ENCODE measurements at regions of chr17 and their contacts with region 1.

Region 1: GRCh38 chr17:43024407-43025289 is at the start of gene RND2:
- DNase-seq: peak; percentile 96
- ATAC-seq: peak; percentile 73
- H3K4me3 ChIP-seq: peak within 1 kb of the TSS; percentile 48
- H3K27ac ChIP-seq: no peak within 1 kb of the TSS
- H3K4me1 ChIP-seq: peaks cover 8% of the 10 kb centered on the region
- H3K27me3 ChIP-seq: peaks cover 4% of the 10 kb centered on the region; the same call in 1 of the 2 replicates
- CTCF ChIP-seq: peak; percentile 96
- POLR2A ChIP-seq: 0 out of 2 replicates have a peak, but pooled peaks have one; percentile 40
- RAD21 ChIP-seq: peak; percentile 91
- total RNA-seq, gene RND2: 1.1 TPM in 2 replicates

Region 2: GRCh38 chr17:43006639-43007551 is 17.8 kb before region 1 on chr17 and contains the start of gene IFI35:
- CTCF ChIA-PET with region 1: no interaction called
- POLR2A ChIA-PET with region 1: no interaction called
- dilution Hi-C with region 1: no loop called
- in situ Hi-C with region 1: no loop called
- intact Hi-C with region 1: loop called (anchors 2 kb)
- DNase-seq: peak; percentile 82
- ATAC-seq: peak; percentile 90
- H3K4me3 ChIP-seq: peak within 1 kb of the TSS; percentile 86
- H3K27ac ChIP-seq: peak within 1 kb of the TSS; percentile 92
- H3K4me1 ChIP-seq: 0 out of 2 replicates have a peak, but pooled peaks cover 2% of the 10 kb centered on the region
- H3K27me3 ChIP-seq: no peaks in the 10 kb centered on the region
- CTCF ChIP-seq: peak; percentile 49
- POLR2A ChIP-seq: peak; percentile 41; the same call in 1 of the 2 replicates
- RAD21 ChIP-seq: peak; percentile 55
- total RNA-seq, gene IFI35: 13.1 and 17.0 TPM in 2 replicates

Region 3: GRCh38 chr17:43170766-43171585 is 146.3 kb after region 1 on chr17 and contains the start of gene NBR1:
- CTCF ChIA-PET with region 1: interaction called, 15 read pairs
- POLR2A ChIA-PET with region 1: interaction called, 4 read pairs
- dilution Hi-C with region 1: no loop called
- in situ Hi-C with region 1: loop called (anchors 5 kb)
- intact Hi-C with region 1: loop called (anchors 1 kb)
- DNase-seq: peak; percentile 98
- ATAC-seq: peak; percentile 83
- H3K4me3 ChIP-seq: peak within 1 kb of the TSS; percentile 75
- H3K27ac ChIP-seq: peak within 1 kb of the TSS; percentile 98
- H3K4me1 ChIP-seq: peaks cover 2% of the 10 kb centered on the region; the same call in 1 of the 2 replicates
- H3K27me3 ChIP-seq: no peaks in the 10 kb centered on the region
- CTCF ChIP-seq: 0 out of 2 replicates have a peak, but pooled peaks have one; percentile 24
- POLR2A ChIP-seq: peak; percentile 91
- RAD21 ChIP-seq: no peak
- total RNA-seq, gene NBR1: 105 and 132 TPM in 2 replicates

Region 4: GRCh38 chr17:43175816-43176570 is 151.3 kb after region 1 on chr17:
- CTCF ChIA-PET with region 1: interaction called, 15 read pairs
- POLR2A ChIA-PET with region 1: interaction called, 13 read pairs
- dilution Hi-C with region 1: no loop called
- in situ Hi-C with region 1: loop called (anchors 5 kb)
- intact Hi-C with region 1: loop called (anchors 1 kb)
- DNase-seq: no peak
- ATAC-seq: no peak
- H3K4me3 ChIP-seq: no peak overlapping the region
- H3K27ac ChIP-seq: no peak overlapping the region; the same call in 1 of the 2 replicates
- H3K4me1 ChIP-seq: peaks cover 2% of the 10 kb centered on the region; the same call in 1 of the 2 replicates
- H3K27me3 ChIP-seq: no peaks in the 10 kb centered on the region
- CTCF ChIP-seq: no peak
- POLR2A ChIP-seq: no peak
- RAD21 ChIP-seq: no peak

Region 5: DNA sequence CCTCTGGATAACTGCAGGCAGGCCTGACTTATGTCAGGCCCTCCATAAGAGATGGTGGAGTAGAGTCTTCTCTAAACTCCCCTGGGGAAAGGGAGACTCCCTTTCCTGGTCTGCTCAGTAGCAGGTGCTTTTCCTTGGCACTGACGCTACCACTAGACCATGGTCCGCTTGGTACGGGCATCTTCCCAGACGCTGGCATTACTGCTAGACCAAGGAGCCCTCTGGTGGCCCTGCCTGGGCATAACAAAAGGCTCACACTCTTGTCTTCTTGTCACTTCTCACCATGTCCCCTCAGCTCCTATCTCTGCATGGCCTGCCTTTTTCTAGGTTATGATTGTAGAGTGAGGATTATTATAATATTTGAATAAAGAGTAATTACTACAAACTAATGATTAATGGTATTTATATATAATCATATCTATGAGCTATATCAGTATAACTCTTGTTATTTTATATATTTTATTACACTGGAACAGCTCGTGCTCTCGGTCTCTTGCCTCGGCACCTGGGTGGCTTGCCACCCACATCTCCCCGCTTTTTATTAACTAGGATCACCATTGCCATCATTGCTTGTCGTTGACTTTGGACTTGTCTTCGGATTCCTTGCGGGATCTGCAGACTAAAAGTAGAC is 314.4 kb after region 1 on chr17:
- CTCF ChIA-PET with region 1: no interaction called
- POLR2A ChIA-PET with region 1: no interaction called
- dilution Hi-C with region 1: no loop called
- in situ Hi-C with region 1: no loop called
- intact Hi-C with region 1: loop called (anchors 2 kb)
- DNase-seq: no peak
- ATAC-seq: no peak
- H3K4me3 ChIP-seq: no peak overlapping the region
- H3K27ac ChIP-seq: no peak overlapping the region
- H3K4me1 ChIP-seq: peaks cover 9% of the 10 kb centered on the region
- H3K27me3 ChIP-seq: no peaks in the 10 kb centered on the region
- CTCF ChIP-seq: peak; percentile 63
- POLR2A ChIP-seq: no peak
- RAD21 ChIP-seq: peak; percentile 71